PC-9 (cell line): ENCODE measurements at regions of chr1 and their contacts with region 1.

Region 1: GRCh38 chr1:197356723-197357533 is 88.9 kb downstream of the CRB1 start:
- DNase-seq: peak; percentile 21 to 41
- H3K4me3 ChIP-seq: no peak overlapping the region
- H3K27ac ChIP-seq: no peak overlapping the region
- H3K4me1 ChIP-seq: no peaks in the 10 kb centered on the region
- H3K27me3 ChIP-seq: no peaks in the 10 kb centered on the region
- CTCF ChIP-seq: peak; percentile 80

Region 2: GRCh38 chr1:196723322-196724185 is 633.4 kb before region 1 on chr1:
- CTCF ChIA-PET with region 1: no interaction called
- POLR2A ChIA-PET with region 1: no interaction called
- intact Hi-C with region 1: loop called (anchors 10 kb)
- DNase-seq: peak in 1 of 2 experiments; percentile 58
- H3K4me3 ChIP-seq: no peak overlapping the region
- H3K27ac ChIP-seq: no peak overlapping the region
- H3K4me1 ChIP-seq: no peaks in the 10 kb centered on the region
- H3K27me3 ChIP-seq: no peaks in the 10 kb centered on the region
- CTCF ChIP-seq: peak; percentile 91

Region 3: DNA sequence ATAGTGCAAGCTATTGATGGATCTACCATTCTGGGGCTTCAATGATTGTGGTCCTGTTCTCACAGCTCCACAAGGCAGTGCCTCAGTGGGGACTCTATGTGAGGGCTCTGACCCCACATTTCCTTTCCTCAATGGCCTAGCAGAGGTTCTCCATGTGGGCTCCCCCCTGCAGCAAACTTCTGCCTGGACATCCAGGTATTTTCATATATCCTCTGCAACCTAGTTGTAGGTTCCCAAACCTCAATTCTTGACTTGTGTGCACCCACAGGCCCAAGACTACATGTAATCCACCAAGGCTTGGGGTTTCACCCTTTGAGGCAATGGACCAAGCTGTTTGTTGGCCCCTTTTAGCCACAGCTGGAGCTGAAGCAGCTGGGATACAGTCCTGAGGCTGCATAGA is 618.2 kb before region 1 on chr1:
- CTCF ChIA-PET with region 1: no interaction called
- POLR2A ChIA-PET with region 1: no interaction called
- intact Hi-C with region 1: loop called (anchors 5 kb)
- DNase-seq: no peak
- H3K4me3 ChIP-seq: no peak overlapping the region
- H3K27ac ChIP-seq: no peak overlapping the region
- H3K4me1 ChIP-seq: no peaks in the 10 kb centered on the region
- H3K27me3 ChIP-seq: no peaks in the 10 kb centered on the region
- CTCF ChIP-seq: no peak

Region 4: DNA sequence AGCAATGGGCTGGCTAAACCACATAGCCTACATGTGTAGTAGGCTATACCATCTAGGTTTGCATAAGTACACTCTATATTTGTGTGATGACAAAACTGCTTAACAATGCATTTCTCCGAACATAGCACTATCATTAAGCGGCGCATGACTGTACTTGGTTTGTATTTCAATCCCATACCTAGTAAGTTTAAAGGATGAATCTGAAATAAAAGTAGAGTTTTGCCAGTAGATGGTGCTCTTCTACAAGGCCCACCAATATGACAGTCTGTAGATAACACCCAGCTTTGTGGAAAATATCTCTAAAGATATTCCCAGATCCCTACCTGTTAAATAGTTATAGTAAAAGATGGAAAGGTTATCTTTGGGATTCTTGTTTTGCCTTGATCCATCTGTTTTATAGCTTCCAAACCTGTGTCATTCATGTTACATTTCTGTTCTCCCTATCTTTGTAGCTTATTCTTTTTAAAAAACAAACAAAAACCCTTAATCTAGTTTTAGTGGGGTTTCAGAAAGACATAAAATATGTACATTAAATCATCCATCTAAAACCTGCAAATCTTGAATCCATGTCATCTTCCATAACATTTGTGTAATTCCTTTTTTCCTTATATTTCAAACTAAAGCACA is 176.6 kb before region 1 on chr1:
- CTCF ChIA-PET with region 1: interaction called, 12 read pairs
- POLR2A ChIA-PET with region 1: no interaction called
- intact Hi-C with region 1: loop called (anchors 1 kb)
- DNase-seq: peak in 1 of 2 experiments; percentile 63
- H3K4me3 ChIP-seq: no peak overlapping the region
- H3K27ac ChIP-seq: no peak overlapping the region
- H3K4me1 ChIP-seq: peaks cover 24% of the 10 kb centered on the region
- H3K27me3 ChIP-seq: no peaks in the 10 kb centered on the region
- CTCF ChIP-seq: peak; percentile 79

Region 5: GRCh38 chr1:197327776-197328364 is 29.1 kb before region 1 on chr1:
- CTCF ChIA-PET with region 1: no interaction called
- POLR2A ChIA-PET with region 1: no interaction called
- intact Hi-C with region 1: no loop called
- DNase-seq: no peak
- H3K4me3 ChIP-seq: no peak overlapping the region
- H3K27ac ChIP-seq: no peak overlapping the region
- H3K4me1 ChIP-seq: no peaks in the 10 kb centered on the region
- H3K27me3 ChIP-seq: no peaks in the 10 kb centered on the region
- CTCF ChIP-seq: peak; percentile 76

Region 6: DNA sequence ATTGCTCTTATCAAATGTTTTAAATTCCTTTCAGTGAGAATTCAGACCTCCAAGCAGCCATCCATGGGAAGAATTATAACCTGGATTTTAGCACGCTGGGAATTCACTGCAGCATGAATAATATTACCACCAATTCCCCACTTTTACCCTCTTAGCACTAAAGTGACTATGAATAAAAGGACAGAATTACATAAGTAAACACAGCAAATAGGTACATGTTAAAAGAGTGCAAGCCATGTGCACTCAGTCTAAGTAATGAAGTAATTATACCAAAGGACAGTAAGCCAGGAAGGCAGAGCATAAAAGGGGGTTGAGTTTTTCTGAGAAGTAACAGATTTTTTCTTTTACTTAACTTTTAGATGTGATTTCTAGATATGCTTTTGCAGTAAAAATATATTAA is 242.0 kb after region 1 on chr1:
- CTCF ChIA-PET with region 1: no interaction called
- POLR2A ChIA-PET with region 1: no interaction called
- intact Hi-C with region 1: no loop called
- DNase-seq: no peak
- H3K4me3 ChIP-seq: no peak overlapping the region
- H3K27ac ChIP-seq: no peak overlapping the region
- H3K4me1 ChIP-seq: no peaks in the 10 kb centered on the region
- H3K27me3 ChIP-seq: no peaks in the 10 kb centered on the region
- CTCF ChIP-seq: no peak